Left lung (tissue), 14 donors: ENCODE measurements at regions of chr11 and their contacts with region 1.

Region 1: DNA sequence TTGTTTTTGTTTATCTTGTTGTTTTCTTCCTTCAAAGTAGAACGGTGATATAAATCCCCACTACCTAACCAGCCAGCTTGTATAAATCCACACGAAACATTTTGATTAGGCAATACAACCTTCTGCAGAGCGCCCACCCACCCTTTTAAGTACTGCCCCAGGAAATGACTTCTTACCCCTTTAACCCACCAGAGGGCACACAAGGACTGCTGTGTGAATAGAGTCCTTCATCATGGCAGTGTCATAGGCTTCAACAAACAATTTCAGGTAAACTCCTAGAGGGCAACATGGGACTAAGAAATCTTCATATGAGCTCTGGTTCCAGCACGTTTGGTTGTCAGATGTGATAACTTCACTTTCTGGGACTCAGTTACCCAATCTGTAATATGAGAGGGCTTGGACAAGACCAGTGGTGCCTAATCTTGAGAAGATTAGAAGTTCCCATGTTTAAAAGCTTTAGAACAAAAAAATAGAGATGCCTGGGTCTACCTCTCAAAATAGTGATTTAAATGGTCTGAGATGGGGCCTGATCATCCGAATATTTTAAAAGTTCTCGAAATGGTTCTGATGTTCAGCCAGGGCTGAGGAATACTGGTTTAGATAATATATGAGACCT is 56.1 kb downstream of the PIWIL4 start:
- DNase-seq: peak in 2 of 4 donors; percentile 62 to 82
- ATAC-seq: peak; percentile 99
- H3K4me3 ChIP-seq: no peak overlapping the region
- H3K27ac ChIP-seq: no peak overlapping the region
- H3K4me1 ChIP-seq: no peaks in the 10 kb centered on the region
- H3K27me3 ChIP-seq: no peaks in the 10 kb centered on the region
- CTCF ChIP-seq: peak; percentile 58 to 67

Region 2: DNA sequence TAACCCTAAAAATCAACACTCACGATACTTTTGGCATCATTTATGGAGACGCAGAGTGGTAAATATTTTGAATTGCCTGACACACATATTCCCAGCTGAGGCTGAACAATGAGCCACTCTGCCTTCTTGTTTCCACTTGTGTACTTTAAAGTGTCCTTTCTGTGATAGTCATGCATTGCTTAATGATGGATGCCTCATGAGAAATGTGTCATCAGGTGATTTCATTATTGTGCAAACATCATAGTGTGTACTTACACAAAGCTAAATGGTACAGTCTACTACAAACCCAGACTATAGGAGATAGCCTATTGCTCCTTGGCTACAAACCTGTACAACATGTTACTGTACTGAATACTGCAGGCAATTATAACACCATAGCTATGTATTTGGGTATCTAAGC is 173.8 kb before region 1 on chr11:
- intact Hi-C with region 1: no loop called
- DNase-seq: no peak
- ATAC-seq: peak; percentile 52
- H3K4me3 ChIP-seq: no peak overlapping the region
- H3K27ac ChIP-seq: no peak overlapping the region
- H3K4me1 ChIP-seq: no peaks in the 10 kb centered on the region
- H3K27me3 ChIP-seq: no peaks in the 10 kb centered on the region
- CTCF ChIP-seq: no peak

Region 3: GRCh38 chr11:94767761-94768601 is 144.8 kb after region 1 on chr11 and contains the start of gene AMOTL1:
- intact Hi-C with region 1: loop called in 1 of 2 experiments (anchors 10 kb)
- DNase-seq: peak; percentile 83 to 94 (median 92)
- ATAC-seq: peak; percentile 91
- H3K4me3 ChIP-seq: peak within 1 kb of the TSS; percentile 75 to 82
- H3K27ac ChIP-seq: peak within 1 kb of the TSS; percentile 93 to 94
- H3K4me1 ChIP-seq: peaks cover 10 to 33% of the 10 kb centered on the region in 2 donors
- H3K27me3 ChIP-seq: peaks cover 0 to 25% of the 10 kb centered on the region in 2 donors
- CTCF ChIP-seq: no peak
- polyA plus RNA-seq, gene AMOTL1: 52.6 to 67.9 (median 57.1) TPM

Region 4: DNA sequence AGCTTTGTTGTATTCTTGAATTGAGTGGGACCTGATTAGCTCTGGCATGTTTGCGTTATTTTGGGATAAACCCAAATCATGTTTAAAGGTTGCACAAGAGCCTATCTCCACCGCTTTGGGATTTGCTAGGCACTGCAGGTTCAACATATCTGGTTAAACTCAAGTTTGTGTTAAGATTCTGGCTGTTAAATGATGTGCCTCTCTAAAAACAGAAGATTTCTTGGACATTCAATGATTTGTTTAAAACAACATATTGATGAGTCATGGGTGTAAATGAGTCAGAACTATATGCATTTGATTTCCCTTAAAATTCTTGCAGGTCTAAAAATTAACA is 212.3 kb after region 1 on chr11:
- intact Hi-C with region 1: no loop called
- DNase-seq: peak in 1 of 4 donors; percentile 82
- ATAC-seq: no peak
- H3K4me3 ChIP-seq: no peak overlapping the region
- H3K27ac ChIP-seq: peak overlapping the region in 1 of 2 donors; percentile 59
- H3K4me1 ChIP-seq: peaks cover 0 to 11% of the 10 kb centered on the region in 2 donors
- H3K27me3 ChIP-seq: no peaks in the 10 kb centered on the region
- CTCF ChIP-seq: no peak

Region 5: DNA sequence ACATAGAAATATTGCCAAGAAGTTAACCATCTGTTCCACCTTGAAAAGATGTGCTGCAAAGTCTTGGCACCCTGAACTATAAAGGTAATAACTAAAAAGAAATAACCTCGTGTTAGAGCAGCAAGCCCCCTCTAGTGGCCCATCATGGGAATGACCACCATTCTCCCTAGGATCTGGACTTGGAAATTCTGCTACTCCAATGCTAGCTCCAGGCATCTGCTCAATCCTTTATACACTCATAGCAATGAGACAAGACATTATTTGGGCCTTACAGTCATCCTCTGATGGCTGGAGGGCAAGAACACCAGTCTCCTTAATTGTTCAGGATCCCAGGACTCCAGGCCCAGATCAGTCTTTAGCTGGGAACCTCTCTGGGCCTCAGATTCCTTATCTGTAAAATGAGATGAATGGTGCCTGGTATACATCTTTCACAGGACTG is 274.1 kb after region 1 on chr11:
- intact Hi-C with region 1: loop called in 1 of 2 experiments (anchors 5 kb)
- DNase-seq: peak in 2 of 4 donors; percentile 33 to 50
- ATAC-seq: peak; percentile 88
- H3K4me3 ChIP-seq: no peak overlapping the region
- H3K27ac ChIP-seq: no peak overlapping the region
- H3K4me1 ChIP-seq: no peaks in the 10 kb centered on the region
- H3K27me3 ChIP-seq: no peaks in the 10 kb centered on the region
- CTCF ChIP-seq: peak; percentile 81 to 87